Natural killer cell (primary cell): ENCODE measurements at regions of chr9 and their contacts with region 1.

Region 1: GRCh38 chr9:105157130-105157583 is 87.3 kb upstream of the SLC44A1 start:
- DNase-seq: peak; percentile 15 to 63
- ATAC-seq: peak; percentile 46 to 76 (median 67)
- H3K4me3 ChIP-seq: no peak overlapping the region
- H3K4me3 Mint-ChIP-seq: no peak overlapping the region
- H3K27ac ChIP-seq: no peak overlapping the region
- H3K27ac Mint-ChIP-seq: no peak overlapping the region
- H3K4me1 ChIP-seq: no peaks in the 10 kb centered on the region
- H3K4me1 Mint-ChIP-seq: peaks cover 0 to under 1% of the 10 kb centered on the region in 2 donors
- H3K27me3 ChIP-seq: no peaks in the 10 kb centered on the region
- H3K27me3 Mint-ChIP-seq: peaks cover 6% of the 10 kb centered on the region in 2 donors
- CTCF ChIP-seq: peak; percentile 45

Region 2: GRCh38 chr9:104863180-104863883 is 293.8 kb before region 1 on chr9:
- intact Hi-C with region 1: loop called (anchors 1 kb)
- DNase-seq: peak; percentile 20 to 76
- ATAC-seq: peak; percentile 68 to 82 (median 76)
- H3K4me3 ChIP-seq: no peak overlapping the region
- H3K4me3 Mint-ChIP-seq: no peak overlapping the region
- H3K27ac ChIP-seq: no peak overlapping the region
- H3K27ac Mint-ChIP-seq: no peak overlapping the region
- H3K4me1 ChIP-seq: peaks cover 3% of the 10 kb centered on the region
- H3K4me1 Mint-ChIP-seq: no peaks in the 10 kb centered on the region
- H3K27me3 ChIP-seq: no peaks in the 10 kb centered on the region
- H3K27me3 Mint-ChIP-seq: peaks cover 0 to 3% of the 10 kb centered on the region in 2 donors
- CTCF ChIP-seq: peak; percentile 69